MCF 10A (cell line): ENCODE measurements at regions of chr1 and their contacts with region 1.

Region 1: GRCh38 chr1:199551967-199552565 is 475.4 kb upstream of the NR5A2 start:
- DNase-seq: peak; percentile 74
- H3K4me3 Mint-ChIP-seq: no peak overlapping the region
- H3K27ac Mint-ChIP-seq: no peak overlapping the region
- H3K4me1 Mint-ChIP-seq: no peaks in the 10 kb centered on the region
- H3K27me3 Mint-ChIP-seq: no peaks in the 10 kb centered on the region
- CTCF ChIP-seq: peak; percentile 96

Region 2: DNA sequence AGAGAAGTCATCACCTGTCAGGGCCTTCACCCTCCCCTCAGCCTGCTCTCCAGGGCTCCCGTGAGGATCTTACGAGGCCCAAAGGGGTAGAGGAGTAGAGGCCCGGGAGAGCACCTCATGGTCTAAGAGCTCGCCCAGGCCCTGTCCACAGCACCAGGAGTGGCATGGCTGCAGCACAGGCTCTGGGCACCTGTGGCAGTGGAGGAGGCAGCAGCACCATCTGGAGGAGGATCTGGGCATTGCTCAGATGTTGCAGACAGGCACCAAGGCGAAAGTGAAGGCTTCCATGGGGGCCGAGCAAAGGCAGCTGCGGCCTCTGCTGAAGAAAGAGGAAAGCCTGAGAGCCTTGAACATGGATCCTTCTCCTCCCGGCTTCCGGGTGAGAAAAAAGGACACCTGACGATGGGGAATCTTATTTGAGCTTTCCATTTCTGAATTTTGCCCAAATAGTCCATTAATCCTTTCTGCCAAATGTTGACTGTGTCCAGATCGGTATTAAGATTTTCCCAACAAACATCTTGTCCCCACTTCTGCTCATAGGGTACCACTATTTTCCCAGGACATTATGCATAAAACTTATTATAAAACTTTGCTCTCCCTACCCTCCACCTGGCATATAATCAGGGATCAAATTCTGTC is 308.5 kb before region 1 on chr1:
- CTCF ChIA-PET with region 1: interaction called, 3 read pairs
- POLR2A ChIA-PET with region 1: no interaction called
- intact Hi-C with region 1: loop called (anchors 1 kb)
- DNase-seq: peak; percentile 71
- H3K4me3 Mint-ChIP-seq: no peak overlapping the region
- H3K27ac Mint-ChIP-seq: no peak overlapping the region
- H3K4me1 Mint-ChIP-seq: peaks cover 6% of the 10 kb centered on the region
- H3K27me3 Mint-ChIP-seq: no peaks in the 10 kb centered on the region
- CTCF ChIP-seq: peak; percentile 90

Region 3: DNA sequence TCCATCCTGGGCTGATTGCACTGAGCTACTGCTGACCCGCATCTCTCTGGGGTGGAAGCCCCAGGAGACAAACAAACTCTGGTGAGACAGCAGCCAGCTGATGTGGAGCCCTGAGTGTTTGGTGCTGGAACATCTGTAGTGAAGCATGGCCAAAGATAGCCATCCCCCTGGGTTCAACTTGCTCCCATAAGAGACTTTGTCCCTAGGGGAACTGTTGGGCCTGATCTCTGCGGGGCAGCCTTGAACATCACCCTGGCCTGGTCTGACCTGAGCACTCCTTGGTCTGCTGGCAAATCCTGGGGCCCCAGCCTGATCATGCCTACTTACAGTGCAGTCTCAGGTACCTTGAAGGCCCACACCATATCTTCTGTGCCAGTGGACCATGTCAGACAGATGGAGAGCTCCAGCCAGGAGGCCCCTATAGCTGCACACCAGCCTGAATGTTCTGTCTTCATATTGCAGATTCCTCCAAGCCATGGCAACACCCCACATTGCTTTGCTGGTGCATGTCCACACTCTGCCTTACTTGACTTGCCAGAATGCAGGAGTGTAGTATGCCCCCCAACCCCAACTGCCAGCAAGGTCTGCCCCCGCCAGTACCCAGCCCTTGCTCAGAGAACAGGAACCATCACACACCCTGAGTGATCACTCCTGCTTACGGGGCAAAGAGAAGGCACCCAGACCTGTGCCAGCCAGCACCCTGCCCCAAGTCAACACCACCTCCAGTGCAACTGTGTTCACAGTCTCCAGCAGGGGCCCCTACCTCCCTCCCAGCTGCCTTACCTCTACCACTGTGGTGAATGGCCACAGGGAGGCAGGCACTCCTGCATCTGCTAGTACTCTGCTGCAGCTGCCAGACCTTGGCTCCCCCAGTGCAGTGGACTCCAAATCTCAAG is 215.1 kb before region 1 on chr1:
- CTCF ChIA-PET with region 1: no interaction called
- POLR2A ChIA-PET with region 1: no interaction called
- intact Hi-C with region 1: no loop called
- DNase-seq: no peak
- H3K4me3 Mint-ChIP-seq: no peak overlapping the region
- H3K27ac Mint-ChIP-seq: no peak overlapping the region
- H3K4me1 Mint-ChIP-seq: no peaks in the 10 kb centered on the region
- H3K27me3 Mint-ChIP-seq: no peaks in the 10 kb centered on the region
- CTCF ChIP-seq: no peak

Region 4: DNA sequence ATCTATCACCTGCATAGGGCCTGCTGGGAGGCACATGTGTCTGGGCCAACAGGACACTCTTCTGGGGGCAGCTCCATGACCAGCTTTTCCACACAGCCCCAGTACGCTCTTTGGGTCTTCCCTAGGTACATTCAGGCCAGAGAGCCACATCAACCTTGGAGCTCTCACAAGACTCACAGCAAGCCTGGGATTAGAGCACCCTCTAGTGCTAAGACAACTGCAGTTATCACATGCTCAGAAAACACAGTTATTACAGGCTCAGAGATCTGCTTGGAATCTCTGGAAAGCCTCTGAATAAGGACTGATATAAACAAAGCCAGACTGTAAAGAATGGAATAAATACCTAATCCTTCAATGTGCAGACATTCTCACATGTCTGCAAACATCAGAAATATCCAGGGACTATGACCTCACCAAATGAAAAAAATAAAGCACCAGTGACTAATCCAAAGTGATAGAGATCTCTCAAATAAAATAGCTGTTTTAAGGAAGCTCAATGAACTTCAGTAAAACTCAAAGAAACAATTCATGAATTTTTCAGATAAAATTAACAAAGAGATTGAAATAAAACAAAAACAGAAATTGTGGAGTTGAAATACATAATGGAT is 88.4 kb before region 1 on chr1:
- CTCF ChIA-PET with region 1: interaction called, 4 read pairs
- POLR2A ChIA-PET with region 1: no interaction called
- intact Hi-C with region 1: loop called (anchors 5 kb)
- DNase-seq: peak; percentile 80
- H3K4me3 Mint-ChIP-seq: no peak overlapping the region
- H3K27ac Mint-ChIP-seq: no peak overlapping the region
- H3K4me1 Mint-ChIP-seq: no peaks in the 10 kb centered on the region
- H3K27me3 Mint-ChIP-seq: no peaks in the 10 kb centered on the region
- CTCF ChIP-seq: peak; percentile 79

Region 5: DNA sequence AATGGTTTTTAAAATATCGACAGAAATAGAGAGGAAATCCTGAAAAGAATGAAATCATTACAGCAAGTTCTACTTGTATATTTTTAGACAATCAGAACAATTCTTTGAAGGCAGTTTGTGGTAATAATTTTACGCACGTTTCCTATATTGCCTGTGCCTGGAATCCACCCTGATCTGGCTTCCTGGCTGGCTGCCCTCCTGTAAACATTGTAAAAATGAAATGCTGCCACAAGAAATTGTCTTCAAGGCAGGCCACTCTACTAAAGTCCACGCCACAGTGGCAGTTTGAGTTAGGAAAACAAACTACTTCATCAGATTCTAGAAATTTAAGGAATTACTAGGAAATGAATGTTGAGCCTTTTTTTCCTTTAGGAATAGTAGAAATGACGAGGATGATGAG is 21.0 kb after region 1 on chr1:
- CTCF ChIA-PET with region 1: no interaction called
- POLR2A ChIA-PET with region 1: no interaction called
- intact Hi-C with region 1: no loop called
- DNase-seq: no peak
- H3K4me3 Mint-ChIP-seq: no peak overlapping the region
- H3K27ac Mint-ChIP-seq: no peak overlapping the region
- H3K4me1 Mint-ChIP-seq: no peaks in the 10 kb centered on the region
- H3K27me3 Mint-ChIP-seq: no peaks in the 10 kb centered on the region
- CTCF ChIP-seq: no peak